ENCODE measurements at regions of chr2 and their contacts with region 1.

Region 1: GRCh38 chr2:38535744-38536506 is 66.8 kb downstream of the HNRNPLL start:
- DNase-seq: peak; percentile 84
- H3K4me3 Mint-ChIP-seq: peak overlapping the region; percentile 54
- H3K27ac Mint-ChIP-seq: no peak overlapping the region
- H3K4me1 Mint-ChIP-seq: no peaks in the 10 kb centered on the region
- H3K27me3 Mint-ChIP-seq: peaks cover 5% of the 10 kb centered on the region

Region 2: DNA sequence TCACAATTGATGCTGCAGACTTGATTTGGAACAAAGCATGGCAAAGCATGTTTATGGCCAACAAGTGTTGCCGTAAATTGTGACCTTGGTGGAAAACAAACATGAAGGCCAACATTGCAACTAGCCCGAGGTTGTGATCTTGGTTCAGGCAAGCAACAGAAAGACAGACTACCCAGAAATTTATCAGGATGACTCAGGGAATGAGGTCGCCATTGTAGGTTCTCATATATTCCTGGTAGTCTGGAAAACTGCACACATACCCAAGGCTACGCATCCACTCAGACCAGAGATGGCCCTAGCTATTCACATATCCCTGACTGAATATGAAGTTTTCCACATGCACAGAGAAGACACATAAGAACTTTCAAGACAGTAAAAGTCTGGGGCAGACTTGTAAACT is 490.1 kb before region 1 on chr2:
- CTCF ChIA-PET with region 1: no interaction called
- intact Hi-C with region 1: no loop called
- DNase-seq: no peak
- H3K4me3 Mint-ChIP-seq: no peak overlapping the region
- H3K27ac Mint-ChIP-seq: no peak overlapping the region
- H3K4me1 Mint-ChIP-seq: no peaks in the 10 kb centered on the region
- H3K27me3 Mint-ChIP-seq: peaks cover 6% of the 10 kb centered on the region

Region 3: GRCh38 chr2:38106405-38107094 is 429.4 kb before region 1 on chr2:
- CTCF ChIA-PET with region 1: no interaction called
- intact Hi-C with region 1: no loop called
- DNase-seq: no peak
- H3K4me3 Mint-ChIP-seq: no peak overlapping the region
- H3K27ac Mint-ChIP-seq: no peak overlapping the region
- H3K4me1 Mint-ChIP-seq: peaks cover 14% of the 10 kb centered on the region
- H3K27me3 Mint-ChIP-seq: peaks cover 29% of the 10 kb centered on the region

Region 4: DNA sequence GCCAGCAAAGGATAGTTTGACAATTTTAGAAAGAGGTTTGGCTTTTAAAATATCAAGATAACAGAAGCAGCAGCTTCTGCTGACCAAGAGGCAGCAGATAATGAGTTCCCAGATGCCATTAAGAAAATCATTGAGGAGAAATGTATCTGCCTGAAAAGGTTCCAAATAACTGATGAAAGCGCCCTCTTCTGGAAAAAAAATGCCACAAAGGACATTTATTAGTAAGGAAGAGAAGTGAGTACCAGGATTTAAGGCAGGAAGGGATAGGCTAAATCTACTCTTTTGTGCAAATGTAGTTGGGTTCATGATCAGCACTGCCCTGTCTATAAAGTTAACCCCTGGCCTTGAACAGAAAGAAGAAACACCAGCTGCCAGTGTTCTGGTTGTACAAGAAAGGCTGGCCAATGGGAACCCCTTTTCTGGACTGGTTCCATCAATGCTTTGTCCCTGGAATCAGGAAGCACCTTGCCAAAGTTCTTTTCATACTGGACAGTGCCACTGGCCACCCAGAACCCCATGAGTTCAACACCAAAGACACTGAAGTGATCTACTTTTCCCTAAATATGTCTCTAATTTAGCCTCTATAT is 299.2 kb after region 1 on chr2:
- CTCF ChIA-PET with region 1: no interaction called
- intact Hi-C with region 1: loop called (anchors 1 kb)
- DNase-seq: no peak
- H3K4me3 Mint-ChIP-seq: no peak overlapping the region
- H3K27ac Mint-ChIP-seq: no peak overlapping the region
- H3K4me1 Mint-ChIP-seq: no peaks in the 10 kb centered on the region
- H3K27me3 Mint-ChIP-seq: no peaks in the 10 kb centered on the region

Region 5: DNA sequence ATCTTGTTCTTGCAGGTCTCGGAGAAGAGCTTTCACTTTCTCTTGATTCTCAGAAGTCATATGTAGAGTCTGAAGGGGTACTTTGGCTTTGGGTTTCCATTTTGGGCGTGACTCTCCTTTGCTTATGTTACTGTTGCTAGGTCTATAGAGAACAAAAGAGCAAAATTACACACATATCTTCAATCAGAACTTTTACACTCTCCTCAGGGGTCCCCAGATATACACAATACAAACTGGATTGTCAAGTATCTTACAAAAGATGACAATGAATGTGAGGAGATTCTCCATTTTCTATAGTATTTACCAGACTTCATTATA is 327.4 kb after region 1 on chr2:
- CTCF ChIA-PET with region 1: no interaction called
- intact Hi-C with region 1: no loop called
- DNase-seq: no peak
- H3K4me3 Mint-ChIP-seq: no peak overlapping the region
- H3K27ac Mint-ChIP-seq: no peak overlapping the region
- H3K4me1 Mint-ChIP-seq: peaks cover 2% of the 10 kb centered on the region
- H3K27me3 Mint-ChIP-seq: no peaks in the 10 kb centered on the region

Measured in activated naive CD4-positive, alpha-beta T cell treated with anti-CD3 and anti-CD28 coated beads for 36 hours (primary cell).